Dorsolateral prefrontal cortex (tissue), 120 donors: ENCODE measurements at regions of chr10 and their contacts with region 1.

Region 1: DNA sequence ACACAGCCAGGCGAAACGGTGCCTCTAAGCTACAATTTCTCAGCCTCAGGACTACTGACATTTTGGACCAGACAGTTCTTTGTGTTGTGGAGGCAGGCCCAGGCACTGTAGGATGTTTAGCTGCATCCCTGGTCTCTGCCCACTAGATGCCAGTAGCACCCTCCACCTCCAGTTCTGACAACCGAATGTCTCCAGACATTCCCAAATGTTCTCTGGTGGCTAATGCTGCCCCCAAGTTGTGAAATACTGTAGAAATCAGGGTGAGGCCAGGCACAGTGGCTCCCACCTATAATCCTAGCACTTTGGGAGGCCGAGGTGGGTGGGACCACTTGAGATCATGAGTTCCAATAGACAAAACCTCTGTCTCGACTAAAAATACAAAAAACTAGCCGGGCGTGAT is 18.2 kb downstream of the HNRNPF start:
- DNase-seq: peak in 9 of 10 donors; percentile 16 to 79 (median 73)
- H3K4me3 ChIP-seq: peak overlapping the region in 2 of 59 donors; percentile 3 to 8
- H3K27ac ChIP-seq: peak overlapping the region in 51 of 59 donors; percentile 0 to 90 (median 70)
- H3K27me3 ChIP-seq: no peaks in the 10 kb centered on the region
- CTCF ChIP-seq: peak; percentile 27 to 88 (median 76)

Region 2: GRCh38 chr10:42866115-42866995 is 524.4 kb before region 1 on chr10:
- intact Hi-C with region 1: loop called in 1 of 2 experiments (anchors 5 kb)
- DNase-seq: peak; percentile 62 to 92 (median 75)
- H3K4me3 ChIP-seq: peak overlapping the region in 58 of 59 donors; percentile 13 to 66 (median 43)
- H3K27ac ChIP-seq: peak overlapping the region in 3 of 59 donors; percentile 9 to 49 (median 31)
- H3K27me3 ChIP-seq: peaks cover 0 to 17% (median 0%) of the 10 kb centered on the region in 45 donors
- CTCF ChIP-seq: peak; percentile 36 to 91 (median 77)

Region 3: GRCh38 chr10:43292755-43293676 is 97.7 kb before region 1 on chr10:
- intact Hi-C with region 1: loop called in 1 of 2 experiments (anchors 2 kb)
- DNase-seq: peak in 9 of 10 donors; percentile 35 to 72 (median 68)
- H3K4me3 ChIP-seq: peak overlapping the region in 5 of 59 donors; percentile 4 to 26 (median 16)
- H3K27ac ChIP-seq: no peak overlapping the region
- H3K27me3 ChIP-seq: no peaks in the 10 kb centered on the region
- CTCF ChIP-seq: peak; percentile 27 to 87 (median 74)

Region 4: DNA sequence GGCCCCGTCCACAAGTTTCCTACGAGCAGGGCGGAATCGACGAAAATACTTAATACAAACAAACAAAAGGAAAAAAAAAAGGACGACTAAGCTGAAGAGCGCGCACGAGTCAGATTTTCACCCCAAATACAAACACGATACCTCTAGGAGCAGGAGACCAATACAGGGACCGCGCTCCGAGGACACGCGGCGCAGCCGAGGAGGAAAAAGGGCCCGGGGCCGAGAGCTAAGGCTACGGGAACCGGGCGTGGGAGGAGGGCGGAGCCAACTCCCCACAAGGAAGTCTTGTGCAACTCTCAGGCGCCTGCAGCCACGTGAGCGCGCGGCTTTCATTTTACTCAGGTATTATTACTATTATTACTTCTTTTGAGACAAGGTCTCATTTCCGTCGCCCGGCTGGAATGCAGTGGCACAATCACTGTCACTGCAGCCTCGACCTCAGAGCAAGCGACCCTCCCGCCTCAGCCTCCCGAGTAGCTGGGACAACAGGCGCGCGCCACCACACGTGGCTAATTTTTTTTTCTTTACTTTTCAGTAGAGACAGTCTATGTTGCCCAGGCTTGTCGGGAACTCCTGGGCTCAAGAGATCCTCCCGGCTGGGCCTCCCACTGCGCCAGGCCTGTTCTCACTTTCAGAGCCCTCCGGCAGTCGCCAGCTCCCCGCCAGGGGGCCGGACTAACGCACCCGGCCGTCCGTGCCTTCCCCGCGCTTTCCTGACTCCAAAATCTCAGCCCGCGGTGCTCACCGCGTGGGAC is 17.0 kb after region 1 on chr10:
- intact Hi-C with region 1: no loop called
- DNase-seq: peak; percentile 61 to 90 (median 81)
- H3K4me3 ChIP-seq: peak overlapping the region; percentile 57 to 97 (median 82)
- H3K27ac ChIP-seq: peak overlapping the region; percentile 55 to 100 (median 97)
- H3K27me3 ChIP-seq: no peaks in the 10 kb centered on the region
- CTCF ChIP-seq: peak in 24 of 56 donors; percentile 4 to 40 (median 23)

Region 5: DNA sequence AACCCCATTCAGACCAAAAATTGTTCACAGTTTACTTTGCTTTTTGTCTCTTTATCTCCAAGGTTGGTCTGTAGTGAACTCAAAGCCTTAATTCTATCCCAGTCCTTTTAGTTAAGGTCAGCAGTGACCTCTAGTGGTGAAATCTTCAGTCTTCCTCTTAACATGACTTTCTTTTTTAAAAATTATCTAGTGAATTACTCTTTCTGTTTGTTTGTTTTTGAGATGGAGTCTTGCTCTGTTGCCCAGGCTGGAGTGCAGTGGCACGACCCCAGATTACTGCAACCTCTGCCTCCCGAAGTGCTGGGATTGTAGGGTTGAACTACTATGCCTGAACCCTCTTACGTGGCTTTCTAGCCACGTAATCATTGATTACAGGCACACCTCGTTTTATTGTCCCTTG is 71.2 kb after region 1 on chr10:
- intact Hi-C with region 1: loop called in 1 of 2 experiments (anchors 2 kb)
- DNase-seq: peak in 1 of 10 donors; percentile 9
- H3K4me3 ChIP-seq: peak overlapping the region in 48 of 59 donors; percentile 2 to 61 (median 40)
- H3K27ac ChIP-seq: peak overlapping the region in 12 of 59 donors; percentile 3 to 65 (median 54)
- H3K27me3 ChIP-seq: no peaks in the 10 kb centered on the region
- CTCF ChIP-seq: peak; percentile 66 to 94 (median 78)